ENCODE measurements at regions of chr4 and their contacts with region 1.

Region 1: GRCh38 chr4:87006676-87007527 is 72.1 kb downstream of the AFF1 start:
- DNase-seq: peak; percentile 74 to 95
- H3K4me3 ChIP-seq: peak overlapping the region; percentile 52 to 81
- H3K27ac ChIP-seq: peak overlapping the region; percentile 89 to 99
- H3K4me1 ChIP-seq: peaks cover 0 to 21% of the 10 kb centered on the region in 2 donors
- H3K27me3 ChIP-seq: no peaks in the 10 kb centered on the region
- CTCF ChIP-seq: peak in 2 of 3 experiments; percentile 2 to 33

Region 2: GRCh38 chr4:86755388-86755787 is 251.5 kb before region 1 on chr4:
- intact Hi-C with region 1: no loop called
- DNase-seq: no peak
- H3K4me3 ChIP-seq: no peak overlapping the region
- H3K27ac ChIP-seq: no peak overlapping the region
- H3K4me1 ChIP-seq: no peaks in the 10 kb centered on the region
- H3K27me3 ChIP-seq: no peaks in the 10 kb centered on the region
- CTCF ChIP-seq: no peak

Region 3: GRCh38 chr4:87038837-87039615 is 32.1 kb after region 1 on chr4:
- intact Hi-C with region 1: loop called (anchors 2 kb)
- DNase-seq: peak; percentile 82 to 94
- H3K4me3 ChIP-seq: no peak overlapping the region
- H3K27ac ChIP-seq: peak overlapping the region; percentile 82
- H3K4me1 ChIP-seq: peaks cover 8 to 52% of the 10 kb centered on the region in 2 donors
- H3K27me3 ChIP-seq: no peaks in the 10 kb centered on the region
- CTCF ChIP-seq: no peak

Region 4: DNA sequence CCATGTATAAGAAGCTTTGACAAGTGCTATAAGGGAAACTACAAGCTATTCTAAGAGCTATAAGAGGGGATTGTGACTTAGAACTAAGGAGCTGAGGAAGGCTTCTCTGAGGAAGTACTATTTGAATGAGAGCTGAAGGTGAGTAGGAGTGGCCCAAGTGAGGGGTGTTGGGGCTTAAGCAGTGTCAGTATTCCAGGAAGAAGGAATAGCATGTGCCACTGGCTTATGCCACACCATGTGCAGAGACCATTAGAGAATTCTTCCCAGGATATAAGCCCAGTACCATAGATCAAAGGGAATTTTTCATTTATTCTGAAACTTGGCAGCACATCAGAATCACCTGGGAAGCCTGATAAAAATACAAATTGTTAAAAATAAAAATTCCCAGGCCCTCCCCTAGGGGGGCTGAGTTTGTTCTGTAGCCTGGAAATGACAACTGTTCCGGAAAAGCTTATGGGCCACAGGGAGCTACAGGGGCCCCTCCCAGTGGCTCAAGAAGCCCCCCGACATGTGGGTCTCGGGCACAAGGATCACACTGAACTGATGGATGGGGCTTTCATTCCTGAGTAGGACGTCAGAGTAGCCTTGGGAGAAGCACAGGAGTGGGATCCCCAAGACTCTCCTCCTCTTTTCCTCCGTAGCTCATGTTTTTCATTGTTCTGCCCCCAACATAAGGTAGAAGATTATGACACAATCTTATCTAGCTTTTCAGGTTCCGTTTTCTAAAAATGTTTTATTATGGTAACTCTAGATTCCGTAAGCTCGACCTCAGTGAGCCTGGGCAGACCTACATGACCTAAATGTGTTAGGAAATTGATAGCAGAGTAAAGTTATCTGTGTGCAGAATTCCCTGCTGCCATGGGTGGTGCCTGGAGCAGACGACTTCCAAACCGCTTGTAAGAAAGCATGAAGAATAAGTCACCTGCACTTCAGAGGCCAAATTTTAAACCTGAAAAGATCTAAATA is 47.2 kb after region 1 on chr4:
- intact Hi-C with region 1: loop called (anchors 1 kb)
- DNase-seq: no peak
- H3K4me3 ChIP-seq: peak overlapping the region; percentile 11 to 43
- H3K27ac ChIP-seq: peak overlapping the region; percentile 83 to 84
- H3K4me1 ChIP-seq: peaks cover 16 to 72% of the 10 kb centered on the region in 2 donors
- H3K27me3 ChIP-seq: no peaks in the 10 kb centered on the region
- CTCF ChIP-seq: no peak

Region 5: GRCh38 chr4:87078987-87079486 is 72.1 kb after region 1 on chr4:
- intact Hi-C with region 1: loop called (anchors 2 kb)
- DNase-seq: peak in 1 of 2 donors; percentile 84
- H3K4me3 ChIP-seq: peak overlapping the region in 1 of 2 donors; percentile 41
- H3K27ac ChIP-seq: peak overlapping the region; percentile 41 to 79
- H3K4me1 ChIP-seq: peaks cover 7 to 42% of the 10 kb centered on the region in 2 donors
- H3K27me3 ChIP-seq: no peaks in the 10 kb centered on the region
- CTCF ChIP-seq: no peak

Region 6: DNA sequence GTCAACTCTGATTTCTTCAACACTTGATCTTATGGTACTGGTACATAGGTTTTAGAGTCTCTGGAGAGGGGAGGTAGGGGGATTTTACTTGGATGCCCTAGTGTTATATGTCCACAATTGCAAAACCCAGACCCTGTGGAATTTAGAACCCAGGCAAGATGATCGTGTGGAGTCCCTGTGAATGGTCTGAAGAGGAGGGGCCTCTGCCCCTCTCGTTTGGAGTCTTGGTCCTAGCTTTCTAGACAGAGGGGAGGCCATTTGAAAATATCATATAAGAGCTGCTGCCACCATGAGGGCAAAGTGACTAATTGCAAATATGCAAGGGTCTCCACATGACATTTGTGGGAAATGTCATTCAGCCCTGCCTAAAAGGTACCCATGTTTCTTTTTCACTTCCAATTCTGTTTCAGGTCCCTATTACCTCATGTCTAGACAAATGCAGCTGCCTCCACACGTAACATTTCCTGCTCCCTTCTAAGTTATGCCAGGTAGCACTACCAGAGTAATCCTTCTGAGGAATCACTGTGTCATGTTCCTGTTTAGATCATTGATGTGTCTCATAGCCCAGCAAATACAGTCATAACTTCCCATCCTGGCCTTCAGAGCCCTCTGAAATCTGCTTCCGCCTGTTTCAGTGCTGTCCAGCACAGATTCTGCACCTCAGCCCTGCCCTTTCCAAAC is 86.7 kb after region 1 on chr4:
- intact Hi-C with region 1: loop called (anchors 5 kb)
- DNase-seq: no peak
- H3K4me3 ChIP-seq: no peak overlapping the region
- H3K27ac ChIP-seq: peak overlapping the region in 1 of 2 donors; percentile 28
- H3K4me1 ChIP-seq: peaks cover 0 to 11% of the 10 kb centered on the region in 2 donors
- H3K27me3 ChIP-seq: no peaks in the 10 kb centered on the region
- CTCF ChIP-seq: peak; percentile 30 to 71 (median 57)

Region 7: DNA sequence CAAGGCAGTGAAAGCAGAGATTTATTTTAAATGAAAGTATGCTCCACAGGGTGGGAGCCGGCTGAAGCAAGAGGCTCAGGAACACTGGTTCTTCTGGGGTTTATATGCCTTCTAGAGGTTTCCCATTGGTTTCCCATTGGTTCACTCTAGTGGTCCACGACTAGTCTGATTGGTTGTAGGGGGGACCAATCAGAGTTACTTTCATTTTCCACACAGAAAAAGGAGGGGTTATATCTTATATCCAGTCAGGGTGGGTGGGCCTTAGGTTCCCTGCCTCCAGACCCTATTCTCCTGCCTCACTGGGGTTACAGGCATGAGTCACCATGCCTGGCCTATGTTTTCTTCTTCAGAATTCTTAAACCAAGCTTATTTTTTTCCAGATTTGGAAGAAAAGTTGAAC is 111.9 kb after region 1 on chr4:
- intact Hi-C with region 1: loop called (anchors 1 kb)
- DNase-seq: no peak
- H3K4me3 ChIP-seq: no peak overlapping the region
- H3K27ac ChIP-seq: peak overlapping the region in 1 of 2 donors; percentile 73
- H3K4me1 ChIP-seq: peaks cover 4 to 43% of the 10 kb centered on the region in 2 donors
- H3K27me3 ChIP-seq: no peaks in the 10 kb centered on the region
- CTCF ChIP-seq: no peak

Region 8: DNA sequence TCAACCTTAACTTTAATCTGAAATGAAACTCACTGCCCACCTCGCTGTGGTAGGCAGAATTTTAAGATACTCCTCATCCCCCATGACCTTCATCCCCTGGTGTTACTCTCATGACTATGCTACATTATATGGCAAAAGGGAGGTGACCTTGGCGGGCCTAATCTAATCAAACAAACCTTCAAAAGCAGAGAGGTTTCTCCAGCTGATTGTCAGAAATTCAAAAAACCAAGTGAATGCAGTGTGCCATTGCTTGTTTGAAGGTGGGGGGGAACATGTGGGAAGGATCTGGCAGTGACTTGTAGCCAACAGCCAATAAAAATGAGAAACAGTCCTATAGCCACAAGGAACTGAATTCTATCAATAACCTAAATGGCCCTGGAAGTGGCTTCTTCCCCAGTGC is 165.0 kb after region 1 on chr4:
- intact Hi-C with region 1: no loop called
- DNase-seq: no peak
- H3K4me3 ChIP-seq: no peak overlapping the region
- H3K27ac ChIP-seq: no peak overlapping the region
- H3K4me1 ChIP-seq: no peaks in the 10 kb centered on the region
- H3K27me3 ChIP-seq: no peaks in the 10 kb centered on the region
- CTCF ChIP-seq: no peak

Region 9: GRCh38 chr4:87601361-87601760 is 594.5 kb after region 1 on chr4:
- intact Hi-C with region 1: no loop called
- DNase-seq: no peak
- H3K4me3 ChIP-seq: no peak overlapping the region
- H3K27ac ChIP-seq: no peak overlapping the region
- H3K4me1 ChIP-seq: no peaks in the 10 kb centered on the region
- H3K27me3 ChIP-seq: no peaks in the 10 kb centered on the region
- CTCF ChIP-seq: no peak

Measured in ascending aorta (tissue), 2 donors.